Dorsolateral prefrontal cortex (tissue), 120 donors: ENCODE measurements at regions of chr13 and their contacts with region 1.

Region 1: GRCh38 chr13:40777166-40777808 is 6.3 kb upstream of the MRPS31 start:
- DNase-seq: no peak
- H3K4me3 ChIP-seq: peak overlapping the region in 35 of 59 donors; percentile 2 to 53 (median 35)
- H3K27ac ChIP-seq: peak overlapping the region in 1 of 59 donors; percentile 36
- H3K27me3 ChIP-seq: no peaks in the 10 kb centered on the region
- CTCF ChIP-seq: peak; percentile 43 to 90 (median 72)

Region 2: GRCh38 chr13:39684531-39685137 is 1092.7 kb before region 1 on chr13:
- intact Hi-C with region 1: loop called in 1 of 2 experiments (anchors 5 kb)
- DNase-seq: no peak
- H3K4me3 ChIP-seq: no peak overlapping the region
- H3K27ac ChIP-seq: no peak overlapping the region
- H3K27me3 ChIP-seq: no peaks in the 10 kb centered on the region
- CTCF ChIP-seq: peak; percentile 38 to 77 (median 63)

Region 3: GRCh38 chr13:40362502-40362901 is 414.8 kb before region 1 on chr13:
- intact Hi-C with region 1: no loop called
- DNase-seq: no peak
- H3K4me3 ChIP-seq: no peak overlapping the region
- H3K27ac ChIP-seq: no peak overlapping the region
- H3K27me3 ChIP-seq: no peaks in the 10 kb centered on the region
- CTCF ChIP-seq: no peak

Region 4: GRCh38 chr13:40613192-40613818 is 164.0 kb before region 1 on chr13:
- intact Hi-C with region 1: no loop called
- DNase-seq: peak in 2 of 10 donors; percentile 26 to 46
- H3K4me3 ChIP-seq: no peak overlapping the region
- H3K27ac ChIP-seq: peak overlapping the region in 34 of 59 donors; percentile 3 to 72 (median 32)
- H3K27me3 ChIP-seq: no peaks in the 10 kb centered on the region
- CTCF ChIP-seq: no peak

Region 5: GRCh38 chr13:40922437-40923040 is 145.3 kb after region 1 on chr13:
- intact Hi-C with region 1: loop called in 1 of 2 experiments (anchors 2 kb)
- DNase-seq: no peak
- H3K4me3 ChIP-seq: peak overlapping the region in 2 of 59 donors; percentile 74 to 85
- H3K27ac ChIP-seq: no peak overlapping the region
- H3K27me3 ChIP-seq: no peaks in the 10 kb centered on the region
- CTCF ChIP-seq: no peak